ENCODE measurements at regions of chr7 and their contacts with region 1.

Region 1: DNA sequence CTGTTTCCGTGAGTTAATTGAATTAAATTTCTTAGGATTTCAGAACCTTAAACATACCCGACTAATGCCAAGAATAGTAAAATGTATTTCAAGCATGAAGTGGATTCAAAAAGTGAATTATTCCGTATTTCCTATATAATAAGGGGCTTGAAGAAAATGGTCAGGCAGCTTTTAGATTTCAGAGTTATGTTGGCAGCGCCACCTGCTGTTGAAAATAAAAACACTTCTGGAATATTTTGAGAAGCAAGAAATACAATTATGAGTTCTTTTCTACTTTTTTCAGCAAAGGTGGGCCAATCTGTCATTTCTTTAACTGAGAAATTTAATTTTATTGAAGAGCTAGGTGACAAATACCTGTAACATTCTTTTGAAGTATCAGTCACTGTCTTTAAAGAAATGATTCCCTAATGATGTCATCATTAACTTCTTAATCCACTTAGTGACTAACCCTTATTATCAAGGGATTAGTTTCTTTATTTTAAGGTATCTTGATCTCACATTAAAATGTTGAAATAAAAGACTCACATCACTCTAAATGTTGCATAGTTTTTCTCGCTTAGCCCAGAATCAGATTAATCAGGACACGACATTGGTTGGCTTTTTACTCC is 36.6 kb upstream of the AGR3 start:
- DNase-seq: no peak

Region 2: GRCh38 chr7:16695621-16696237 is 222.7 kb before region 1 on chr7:
- intact Hi-C with region 1: loop called (anchors 5 kb)
- DNase-seq: no peak

Region 3: DNA sequence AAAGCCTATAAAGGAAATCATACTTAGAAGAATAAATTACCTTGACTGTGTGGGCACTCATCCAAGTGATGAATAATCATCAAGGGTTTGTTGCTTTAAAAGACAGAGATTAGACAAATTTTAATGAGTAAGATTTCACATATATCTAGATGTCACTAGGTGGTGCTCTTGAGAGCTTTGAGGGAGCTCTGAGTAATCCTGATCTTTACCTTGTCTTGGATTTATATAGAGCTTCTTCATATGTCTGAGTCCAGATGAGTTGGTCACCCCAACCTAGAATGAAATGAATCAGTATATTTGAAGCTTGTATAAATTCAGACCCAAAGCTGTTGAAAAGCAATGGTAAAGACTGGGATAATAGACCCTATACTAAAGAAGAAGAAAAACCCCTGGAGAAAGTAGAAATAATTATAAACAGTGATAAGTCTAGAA is 117.3 kb before region 1 on chr7:
- intact Hi-C with region 1: loop called (anchors 10 kb)
- DNase-seq: no peak

Region 4: DNA sequence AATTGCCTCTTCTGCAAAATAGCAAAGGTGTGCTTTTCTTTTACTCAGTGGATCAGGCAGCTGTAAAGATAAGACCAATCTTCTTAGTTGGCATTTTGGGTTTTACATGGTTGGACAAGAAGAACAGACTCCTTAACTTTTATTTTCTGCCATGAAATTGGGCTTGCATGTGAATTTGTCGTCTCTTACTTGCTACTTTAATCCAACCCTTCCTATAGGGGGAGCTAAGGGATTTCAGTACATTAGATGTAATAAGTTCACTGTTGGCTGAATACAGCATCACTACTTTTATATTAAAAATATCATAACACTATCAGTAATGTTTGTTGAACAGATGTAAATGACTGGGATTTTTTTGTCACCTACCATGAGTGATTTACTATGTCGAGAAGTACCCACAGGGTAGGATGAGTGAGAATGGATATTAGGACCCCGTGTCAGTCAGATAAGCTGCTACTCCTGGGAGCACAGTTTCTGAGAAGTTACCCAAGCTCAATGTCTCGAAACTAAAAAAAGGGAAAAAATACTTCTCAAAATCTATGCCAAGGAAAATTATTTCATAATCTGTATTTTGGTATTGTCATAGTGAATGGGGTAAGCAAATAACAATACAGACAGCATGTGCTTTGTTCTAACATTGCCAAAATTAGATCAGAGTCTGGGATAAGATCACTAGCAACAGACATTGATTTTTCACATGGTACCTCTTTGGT is 90.8 kb after region 1 on chr7:
- intact Hi-C with region 1: no loop called
- DNase-seq: no peak

Region 5: DNA sequence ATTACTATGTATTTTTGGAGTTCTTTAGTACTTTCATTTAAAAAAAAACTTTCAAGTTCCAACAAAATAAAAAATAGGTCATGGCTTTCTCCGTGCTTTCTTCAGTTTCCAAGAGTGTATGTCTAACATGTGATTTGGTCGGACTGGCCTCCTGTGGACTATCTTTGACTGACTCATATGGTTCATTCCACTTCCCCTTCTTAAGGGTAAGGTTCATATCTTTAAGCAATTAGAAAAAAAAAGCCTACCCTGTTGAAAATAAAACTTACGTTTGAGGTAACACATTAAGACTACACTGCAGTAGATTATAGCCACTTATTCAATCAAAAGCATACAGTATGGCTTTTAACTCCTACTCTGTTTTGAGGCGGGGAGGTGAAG is 267.3 kb after region 1 on chr7:
- intact Hi-C with region 1: no loop called
- DNase-seq: no peak